ENCODE measurements at regions of chr12 and their contacts with region 1.

Region 1: DNA sequence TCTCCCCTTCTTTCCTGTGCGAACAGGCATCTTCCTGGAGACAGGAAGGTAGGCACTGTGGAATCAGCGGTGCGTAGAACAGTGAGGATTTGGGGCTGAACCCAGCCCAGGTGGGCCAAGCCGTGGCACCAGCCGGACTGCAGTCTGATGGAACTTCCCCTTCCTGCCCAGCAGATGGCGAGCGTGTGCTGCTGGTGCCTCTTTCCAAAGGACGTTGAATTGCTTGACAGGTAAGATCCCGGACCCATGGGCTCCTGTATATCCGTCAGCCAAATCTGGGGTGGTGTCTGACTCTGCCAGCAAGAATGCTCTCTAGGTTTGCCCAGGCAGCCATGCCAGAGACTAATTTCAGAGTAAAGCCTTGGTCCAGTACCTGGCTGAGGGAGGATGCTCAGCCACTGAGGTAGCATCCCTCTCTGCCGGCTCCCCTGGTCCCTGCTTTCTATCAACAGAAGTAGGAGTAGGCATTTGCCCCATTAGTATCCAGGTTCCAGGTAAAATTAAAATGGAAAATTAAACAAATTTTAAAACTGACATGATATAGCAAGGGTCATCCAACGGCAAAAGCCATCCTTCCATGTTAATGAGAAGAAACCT is 21.1 kb upstream of the KCNA5 start:
- DNase-seq: no peak
- ATAC-seq: peak; percentile 83

Region 2: GRCh38 chr12:4974217-4974616 is 48.3 kb before region 1 on chr12:
- intact Hi-C with region 1: no loop called
- DNase-seq: no peak
- ATAC-seq: no peak

Region 3: DNA sequence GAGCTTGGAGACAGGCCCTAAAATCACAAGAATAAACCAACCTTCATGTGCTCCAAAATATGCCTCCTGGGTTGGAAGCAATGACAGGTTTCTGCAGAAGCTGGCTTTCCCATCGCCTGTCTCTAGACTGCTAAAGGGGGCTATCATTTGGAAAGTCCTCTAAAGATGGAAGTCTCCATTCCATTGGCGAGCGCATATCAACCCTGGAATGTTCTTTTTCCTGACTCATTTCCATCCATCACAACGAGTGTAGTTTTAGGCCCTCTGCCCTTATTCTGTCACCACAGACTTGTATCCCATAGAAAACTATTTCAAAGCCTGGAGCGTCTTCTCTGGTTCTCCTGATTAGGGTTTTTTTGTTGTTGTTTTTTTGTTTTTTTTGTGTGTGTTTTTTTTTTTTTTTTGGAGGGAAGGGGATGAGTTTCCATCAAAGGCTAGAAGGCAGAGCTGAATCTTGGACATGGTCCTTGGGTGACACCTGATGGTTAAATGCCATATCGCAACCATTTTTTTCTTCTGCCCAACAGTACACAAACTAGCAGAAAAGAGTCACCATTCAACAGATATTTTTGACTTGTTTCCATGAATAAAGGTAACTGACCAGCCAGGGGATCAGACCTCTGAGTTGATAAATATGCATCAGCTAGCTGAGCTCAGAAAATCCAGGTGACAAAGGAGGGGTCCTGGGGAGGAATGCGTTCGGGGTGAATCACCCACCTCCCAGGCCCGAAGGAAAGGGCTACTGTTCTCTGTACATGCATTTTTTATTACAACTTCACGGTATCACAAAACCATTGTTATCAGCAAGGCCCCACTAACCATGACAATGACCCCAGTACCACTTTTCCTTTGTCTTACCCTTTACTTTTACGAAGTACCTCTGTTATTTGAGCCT is 61.6 kb after region 1 on chr12:
- intact Hi-C with region 1: loop called (anchors 1 kb)
- DNase-seq: no peak
- ATAC-seq: peak; percentile 66